ENCODE measurements at regions of chr16 and their contacts with region 1.

Region 1: GRCh38 chr16:23595951-23596720 is at the start of gene NDUFAB1:
- DNase-seq: peak; percentile 90
- H3K4me3 Mint-ChIP-seq: peak within 1 kb of the TSS; percentile 88
- H3K27ac Mint-ChIP-seq: peak within 1 kb of the TSS; percentile 80
- H3K4me1 Mint-ChIP-seq: peaks cover 30% of the 10 kb centered on the region
- H3K27me3 Mint-ChIP-seq: no peaks in the 10 kb centered on the region
- total RNA-seq, gene NDUFAB1: 146 and 148 TPM in 2 replicates

Region 2: GRCh38 chr16:23510164-23510914 is 85.8 kb before region 1 on chr16 and contains the start of gene GGA2:
- intact Hi-C with region 1: loop called (anchors 2 kb)
- DNase-seq: peak; percentile 74
- H3K4me3 Mint-ChIP-seq: peak within 1 kb of the TSS; percentile 89
- H3K27ac Mint-ChIP-seq: peak within 1 kb of the TSS; percentile 87
- H3K4me1 Mint-ChIP-seq: peaks cover 50% of the 10 kb centered on the region
- H3K27me3 Mint-ChIP-seq: no peaks in the 10 kb centered on the region
- total RNA-seq, gene GGA2: 106 and 112 TPM in 2 replicates

Region 3: GRCh38 chr16:23608194-23608593 is 12.1 kb after region 1 on chr16:
- intact Hi-C with region 1: no loop called
- DNase-seq: no peak
- H3K4me3 Mint-ChIP-seq: no peak overlapping the region
- H3K27ac Mint-ChIP-seq: no peak overlapping the region
- H3K4me1 Mint-ChIP-seq: no peaks in the 10 kb centered on the region
- H3K27me3 Mint-ChIP-seq: no peaks in the 10 kb centered on the region

Measured in activated T-helper 1 cell treated with anti-CD3 and anti-CD28 coated beads, Interleukin-12 subunit alpha, Interleukin-12 subunit beta, Interleukin-2, Interleukin-4 antibody, amounts not matched to agents 30 ng/mL and 10 ng/mL and 1 ng/mL, durations not matched to agents 14 hours and 24 hours and 36 hours (primary cell).